Activated CD4-positive, alpha-beta T cell treated with anti-CD3 and anti-CD28 coated beads, Interleukin-2, amount 10 ng/mL, durations not matched to agents 24 days and 14 days (primary cell): ENCODE measurements at regions of chr9 and their contacts with region 1.

Region 1: DNA sequence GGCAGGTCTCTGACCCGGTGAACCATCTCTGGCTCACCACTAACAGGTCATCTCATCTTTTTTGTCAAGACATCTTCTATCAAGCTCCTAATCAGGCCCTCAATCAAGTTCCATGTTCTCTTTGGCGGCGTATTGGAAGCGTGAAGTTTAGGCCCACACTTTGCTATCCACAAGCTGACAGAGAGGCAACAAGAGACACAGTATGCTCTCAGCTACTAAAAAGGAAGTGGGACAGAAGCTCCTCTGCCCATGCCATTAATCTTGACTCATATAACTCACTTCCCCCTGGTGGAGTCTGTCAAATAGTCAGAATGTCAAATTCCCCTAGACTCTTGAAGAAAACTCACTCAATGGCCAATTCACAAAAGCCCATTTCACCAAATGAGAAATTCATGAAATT is 77.6 kb upstream of the TMC1 start:
- DNase-seq: peak; percentile 66
- H3K4me3 Mint-ChIP-seq: peak overlapping the region; percentile 33
- H3K27ac Mint-ChIP-seq: peak overlapping the region; percentile 81
- H3K4me1 Mint-ChIP-seq: peaks cover 32% of the 10 kb centered on the region
- H3K27me3 Mint-ChIP-seq: peaks cover 3% of the 10 kb centered on the region

Region 2: GRCh38 chr9:72383978-72384709 is 59.7 kb before region 1 on chr9:
- intact Hi-C with region 1: loop called (anchors 2 kb)
- DNase-seq: no peak
- H3K4me3 Mint-ChIP-seq: no peak overlapping the region
- H3K27ac Mint-ChIP-seq: no peak overlapping the region
- H3K4me1 Mint-ChIP-seq: peaks cover 11% of the 10 kb centered on the region
- H3K27me3 Mint-ChIP-seq: peaks cover 4% of the 10 kb centered on the region

Region 3: DNA sequence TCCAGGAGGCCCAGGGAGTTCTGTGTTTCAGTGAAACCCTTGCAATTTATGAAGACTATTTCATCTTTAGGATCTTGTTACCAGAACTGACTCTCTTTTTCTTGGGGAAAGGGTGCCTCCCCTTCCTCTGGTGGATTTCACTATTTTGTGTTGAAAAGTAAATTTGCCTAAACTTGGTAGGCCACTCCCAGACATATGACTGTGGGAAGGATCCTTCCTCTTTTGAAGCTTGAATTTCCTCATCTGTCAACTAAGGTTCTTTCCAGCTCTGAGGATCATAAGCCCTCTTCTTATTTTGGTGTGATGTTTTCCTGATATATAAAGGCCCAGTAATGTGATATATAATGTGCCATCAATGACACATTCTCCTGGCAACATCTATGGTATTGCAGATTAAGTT is 19.7 kb before region 1 on chr9:
- intact Hi-C with region 1: no loop called
- DNase-seq: no peak
- H3K4me3 Mint-ChIP-seq: no peak overlapping the region
- H3K27ac Mint-ChIP-seq: no peak overlapping the region
- H3K4me1 Mint-ChIP-seq: peaks cover 3% of the 10 kb centered on the region
- H3K27me3 Mint-ChIP-seq: peaks cover 9% of the 10 kb centered on the region

Region 4: DNA sequence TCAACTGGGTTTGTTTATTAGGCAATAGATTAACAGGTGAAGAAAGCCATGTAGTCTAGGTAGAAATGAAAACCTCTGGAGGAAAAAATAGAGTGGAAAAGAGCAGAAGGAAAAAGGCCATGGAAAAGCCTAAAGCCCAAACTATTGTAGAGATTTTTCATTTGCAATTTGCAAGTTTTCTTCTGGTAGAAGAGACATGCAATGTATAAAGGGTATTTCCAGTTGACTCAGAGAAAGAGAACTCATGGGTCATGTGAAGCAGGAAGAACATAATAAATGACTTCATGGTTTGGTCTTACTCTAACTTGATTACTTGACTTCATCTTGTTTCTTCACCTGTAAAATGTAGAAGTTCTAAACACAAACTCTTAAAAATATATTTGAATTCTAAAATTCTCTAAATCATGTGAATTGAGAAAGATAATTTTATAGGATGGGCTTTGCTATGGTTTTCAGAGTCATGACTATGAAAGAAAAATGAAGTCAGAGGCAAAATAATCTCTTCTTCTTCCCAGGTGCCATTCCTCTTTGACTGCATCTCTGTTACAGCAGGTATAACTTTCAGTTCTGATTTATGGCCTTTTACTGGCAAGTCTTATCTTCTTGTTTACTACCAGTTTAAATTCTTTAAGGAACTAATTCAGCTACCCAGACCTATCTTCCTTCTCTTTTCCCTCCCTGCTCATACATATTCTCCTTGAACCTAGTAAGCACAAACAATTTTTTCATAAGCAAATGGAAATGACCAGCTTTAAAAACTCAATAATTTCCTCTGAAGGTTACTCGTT is 29.8 kb after region 1 on chr9:
- intact Hi-C with region 1: loop called (anchors 1 kb)
- DNase-seq: no peak
- H3K4me3 Mint-ChIP-seq: peak overlapping the region; percentile 42
- H3K27ac Mint-ChIP-seq: peak overlapping the region; percentile 83
- H3K4me1 Mint-ChIP-seq: peaks cover 39% of the 10 kb centered on the region
- H3K27me3 Mint-ChIP-seq: no peaks in the 10 kb centered on the region

Region 5: GRCh38 chr9:72557549-72557948 is 113.7 kb after region 1 on chr9:
- intact Hi-C with region 1: loop called (anchors 1 kb)
- DNase-seq: peak; percentile 79
- H3K4me3 Mint-ChIP-seq: peak overlapping the region; percentile 28
- H3K27ac Mint-ChIP-seq: peak overlapping the region; percentile 79
- H3K4me1 Mint-ChIP-seq: peaks cover 16% of the 10 kb centered on the region
- H3K27me3 Mint-ChIP-seq: no peaks in the 10 kb centered on the region